Adrenal gland (tissue), 19 donors: ENCODE measurements at regions of chr10 and their contacts with region 1.

Region 1: GRCh38 chr10:72364239-72364777 is 9.6 kb upstream of the DNAJB12 start:
- DNase-seq: peak; percentile 86 to 97 (median 92)
- H3K4me3 ChIP-seq: no peak overlapping the region
- H3K27ac ChIP-seq: peak overlapping the region in 3 of 5 donors; percentile 27 to 38 (median 32)
- H3K4me1 ChIP-seq: peaks cover 3 to 11% of the 10 kb centered on the region in 2 donors
- H3K27me3 ChIP-seq: no peaks in the 10 kb centered on the region
- CTCF ChIP-seq: peak; percentile 85 to 98 (median 96)
- POLR2A ChIP-seq: no peak

Region 2: DNA sequence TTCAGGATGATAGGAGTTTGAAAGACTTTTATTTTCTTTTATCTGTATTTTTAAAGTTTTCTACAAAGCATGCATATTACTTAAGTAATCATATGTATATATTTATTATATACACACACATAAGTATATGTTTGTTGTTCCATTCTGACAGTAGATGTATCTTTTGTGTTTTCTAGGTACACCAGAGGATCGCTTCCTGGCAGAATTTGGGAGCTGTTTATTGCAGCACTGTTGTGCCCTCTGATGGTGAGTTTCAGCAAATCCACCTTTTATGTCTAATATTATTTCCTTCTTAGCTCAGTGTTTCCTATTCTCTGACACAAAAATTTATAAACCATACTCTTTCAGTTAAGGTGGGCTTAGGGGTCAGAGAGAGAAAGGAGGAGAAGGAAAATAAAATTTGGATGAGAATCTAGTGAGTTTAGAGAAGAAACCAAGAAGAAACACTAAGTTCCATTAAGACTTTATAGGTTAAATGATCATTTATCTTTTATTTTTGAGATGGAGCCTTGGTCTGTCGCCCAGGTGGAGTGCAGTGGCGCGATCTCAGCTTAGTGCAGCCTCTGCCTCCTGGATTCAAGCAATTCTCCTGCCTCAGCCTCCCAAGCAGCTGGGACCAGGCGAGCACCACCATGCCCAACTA is 470.0 kb after region 1 on chr10:
- intact Hi-C with region 1: loop called (anchors 5 kb)
- DNase-seq: peak; percentile 36 to 74 (median 55)
- H3K4me3 ChIP-seq: no peak overlapping the region
- H3K27ac ChIP-seq: no peak overlapping the region
- H3K4me1 ChIP-seq: no peaks in the 10 kb centered on the region
- H3K27me3 ChIP-seq: no peaks in the 10 kb centered on the region
- CTCF ChIP-seq: peak; percentile 46 to 86 (median 76)
- POLR2A ChIP-seq: no peak